Activated naive CD4-positive, alpha-beta T cell treated with anti-CD3 and anti-CD28 coated beads for 36 hours (primary cell): ENCODE measurements at regions of chr3 and their contacts with region 1.

Region 1: GRCh38 chr3:66971891-66972551 is 26.1 kb upstream of the KBTBD8 start:
- DNase-seq: peak; percentile 81
- H3K4me3 Mint-ChIP-seq: peak overlapping the region; percentile 68
- H3K27ac Mint-ChIP-seq: peak overlapping the region; percentile 50
- H3K4me1 Mint-ChIP-seq: peaks cover 7% of the 10 kb centered on the region
- H3K27me3 Mint-ChIP-seq: no peaks in the 10 kb centered on the region

Region 2: DNA sequence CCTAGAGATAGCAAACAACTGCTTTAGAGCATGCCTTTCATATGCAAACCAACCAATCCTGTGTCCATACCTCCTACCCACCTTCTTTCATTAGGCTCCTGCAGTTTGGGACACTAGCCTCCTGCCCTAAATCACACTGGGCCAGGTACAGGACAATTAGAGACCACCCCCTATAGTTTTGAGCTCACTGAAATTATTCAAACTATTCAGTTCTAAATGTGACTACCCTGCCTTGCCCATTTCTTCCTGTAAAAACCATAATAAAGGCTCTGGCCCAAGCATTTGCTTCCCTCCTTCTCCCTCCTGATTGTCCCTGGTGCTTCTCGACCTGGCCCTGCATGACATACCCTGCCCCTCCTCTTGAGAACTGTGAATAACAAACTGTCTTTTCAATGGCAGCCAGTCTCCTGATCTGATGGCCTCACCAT is 439.8 kb before region 1 on chr3:
- CTCF ChIA-PET with region 1: no interaction called
- intact Hi-C with region 1: no loop called
- DNase-seq: no peak
- H3K4me3 Mint-ChIP-seq: no peak overlapping the region
- H3K27ac Mint-ChIP-seq: no peak overlapping the region
- H3K4me1 Mint-ChIP-seq: no peaks in the 10 kb centered on the region
- H3K27me3 Mint-ChIP-seq: no peaks in the 10 kb centered on the region

Region 3: DNA sequence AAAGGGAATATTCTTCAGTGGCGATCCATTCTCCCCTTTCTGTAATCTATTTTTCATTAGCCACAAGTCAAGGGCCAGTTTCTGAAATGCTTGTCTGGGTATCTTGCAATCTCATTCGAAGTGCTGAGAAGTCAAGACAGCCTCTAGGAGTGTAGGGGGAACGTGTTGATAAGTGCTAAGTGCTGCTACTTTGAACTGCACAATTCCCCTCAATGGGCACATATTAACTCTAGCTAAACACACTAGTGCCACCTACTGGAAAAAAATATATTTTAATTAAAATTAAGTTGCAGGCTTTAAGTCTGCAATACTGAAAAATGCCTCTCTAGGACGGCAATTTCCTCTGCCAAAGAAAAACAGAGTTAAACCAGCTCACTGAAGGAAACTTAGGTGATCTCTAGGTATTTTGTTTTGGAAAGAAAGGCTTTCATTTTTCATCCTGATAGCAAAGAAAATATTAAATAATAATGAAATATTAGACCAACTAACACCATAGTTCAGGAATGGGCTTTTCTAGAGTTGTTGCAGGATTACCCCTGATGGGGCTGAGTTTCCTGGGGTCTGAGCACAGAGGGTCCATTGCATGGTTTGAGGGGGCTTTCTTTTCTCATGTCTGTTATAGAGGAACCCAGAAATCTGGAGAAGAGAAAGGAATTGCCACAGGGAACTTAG is 155.8 kb before region 1 on chr3:
- CTCF ChIA-PET with region 1: no interaction called
- intact Hi-C with region 1: no loop called
- DNase-seq: peak; percentile 12
- H3K4me3 Mint-ChIP-seq: no peak overlapping the region
- H3K27ac Mint-ChIP-seq: no peak overlapping the region
- H3K4me1 Mint-ChIP-seq: no peaks in the 10 kb centered on the region
- H3K27me3 Mint-ChIP-seq: no peaks in the 10 kb centered on the region

Region 4: GRCh38 chr3:66983101-66983500 is 11.1 kb after region 1 on chr3:
- CTCF ChIA-PET with region 1: interaction called, 15 read pairs
- intact Hi-C with region 1: no loop called
- DNase-seq: no peak
- H3K4me3 Mint-ChIP-seq: no peak overlapping the region
- H3K27ac Mint-ChIP-seq: no peak overlapping the region
- H3K4me1 Mint-ChIP-seq: no peaks in the 10 kb centered on the region
- H3K27me3 Mint-ChIP-seq: no peaks in the 10 kb centered on the region

Region 5: GRCh38 chr3:66998113-66998903 is 26.3 kb after region 1 on chr3 and contains the start of gene KBTBD8:
- CTCF ChIA-PET with region 1: interaction called, 17 read pairs
- intact Hi-C with region 1: loop called (anchors 1 kb)
- DNase-seq: peak; percentile 98
- H3K4me3 Mint-ChIP-seq: peak within 1 kb of the TSS; percentile 87
- H3K27ac Mint-ChIP-seq: peak within 1 kb of the TSS; percentile 95
- H3K4me1 Mint-ChIP-seq: peaks cover 27% of the 10 kb centered on the region
- H3K27me3 Mint-ChIP-seq: peaks cover 4% of the 10 kb centered on the region
- total RNA-seq, gene KBTBD8: 6.8 to 7.4 TPM

Region 6: DNA sequence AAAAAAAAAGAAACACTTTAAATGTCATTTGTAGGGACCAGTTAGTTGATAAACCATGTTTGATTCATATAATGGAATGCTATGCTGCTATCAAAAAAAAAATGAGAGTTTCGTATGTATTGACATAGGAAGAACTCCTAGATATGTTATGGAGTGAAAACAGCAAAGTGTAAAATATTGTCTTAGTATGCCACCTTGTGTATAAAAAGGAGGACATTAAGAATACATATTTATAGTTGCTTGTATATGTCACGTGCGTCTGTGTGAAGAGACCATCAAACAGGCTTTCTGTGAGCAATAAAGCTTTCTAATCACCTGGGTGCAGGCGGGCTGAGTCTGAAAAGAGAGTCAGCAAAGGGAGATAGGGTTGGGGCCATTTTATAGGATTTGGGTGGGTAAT is 65.6 kb after region 1 on chr3:
- CTCF ChIA-PET with region 1: interaction called, 26 read pairs
- intact Hi-C with region 1: loop called (anchors 1 kb)
- DNase-seq: no peak
- H3K4me3 Mint-ChIP-seq: no peak overlapping the region
- H3K27ac Mint-ChIP-seq: no peak overlapping the region
- H3K4me1 Mint-ChIP-seq: no peaks in the 10 kb centered on the region
- H3K27me3 Mint-ChIP-seq: no peaks in the 10 kb centered on the region

Region 7: DNA sequence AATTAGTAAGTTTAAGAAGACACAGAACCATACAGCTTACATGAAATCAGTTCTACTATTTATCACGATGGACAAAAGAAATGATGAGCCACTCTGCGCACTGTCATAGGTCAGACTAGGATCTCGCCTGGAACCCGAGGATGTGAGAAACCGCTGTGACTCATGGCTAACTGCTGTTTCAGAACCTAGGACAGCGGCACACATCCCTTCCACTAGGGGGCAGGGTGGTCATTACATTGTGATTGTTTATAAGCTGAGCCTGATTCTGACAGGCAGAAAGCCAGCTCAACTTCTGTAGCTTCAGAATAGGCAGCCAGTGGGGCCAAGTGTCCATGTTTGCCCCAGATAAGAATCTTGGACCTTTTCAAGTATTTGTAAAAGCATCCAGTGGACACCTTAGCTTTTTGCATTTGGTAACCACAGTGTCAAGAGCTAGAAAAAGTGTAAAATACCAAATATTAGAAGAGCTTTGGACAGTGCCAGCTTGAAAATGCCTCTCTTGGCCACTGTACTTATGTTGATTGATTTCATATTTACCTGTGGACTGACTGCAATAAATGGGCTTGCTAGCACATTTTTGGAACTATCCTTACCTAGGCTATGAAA is 141.9 kb after region 1 on chr3:
- CTCF ChIA-PET with region 1: interaction called, 39 read pairs
- intact Hi-C with region 1: loop called (anchors 1 kb)
- DNase-seq: peak; percentile 94
- H3K4me3 Mint-ChIP-seq: no peak overlapping the region
- H3K27ac Mint-ChIP-seq: no peak overlapping the region
- H3K4me1 Mint-ChIP-seq: peaks cover 4% of the 10 kb centered on the region
- H3K27me3 Mint-ChIP-seq: peaks cover 24% of the 10 kb centered on the region

Region 8: GRCh38 chr3:67357610-67358458 is 385.8 kb after region 1 on chr3:
- CTCF ChIA-PET with region 1: interaction called, 4 read pairs
- intact Hi-C with region 1: loop called (anchors 5 kb)
- DNase-seq: no peak
- H3K4me3 Mint-ChIP-seq: no peak overlapping the region
- H3K27ac Mint-ChIP-seq: no peak overlapping the region
- H3K4me1 Mint-ChIP-seq: peaks cover 24% of the 10 kb centered on the region
- H3K27me3 Mint-ChIP-seq: no peaks in the 10 kb centered on the region

Region 9: DNA sequence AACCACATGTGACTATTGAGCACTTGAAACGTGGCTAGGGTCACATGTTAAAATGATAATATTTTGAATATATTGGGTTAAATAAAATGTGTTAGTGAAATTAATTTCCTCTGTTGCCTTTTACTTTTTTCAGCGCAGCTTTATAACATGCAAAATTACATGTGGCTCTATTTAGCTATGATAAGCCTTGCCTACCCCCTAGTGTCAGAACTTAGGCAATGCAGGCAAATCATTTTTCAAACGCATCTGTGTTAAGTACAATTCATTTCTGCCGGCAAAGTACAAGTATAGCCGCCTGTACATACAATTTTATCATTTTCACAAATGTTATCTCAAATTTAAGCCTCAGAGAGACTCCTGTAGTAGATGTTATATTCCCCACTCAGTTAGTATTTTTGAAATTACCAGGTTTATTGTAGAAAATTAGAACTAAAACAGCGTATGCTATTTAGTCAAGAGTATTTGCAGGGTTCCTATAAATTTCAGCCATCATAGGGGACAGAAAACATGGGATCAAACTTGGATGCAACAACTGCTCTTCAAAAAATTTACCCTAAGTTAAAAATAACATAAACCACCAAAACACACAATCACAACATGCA is 1904.2 kb after region 1 on chr3:
- CTCF ChIA-PET with region 1: interaction called, 8 read pairs
- intact Hi-C with region 1: loop called (anchors 1 kb)
- DNase-seq: peak; percentile 51
- H3K4me3 Mint-ChIP-seq: no peak overlapping the region
- H3K27ac Mint-ChIP-seq: no peak overlapping the region
- H3K4me1 Mint-ChIP-seq: no peaks in the 10 kb centered on the region
- H3K27me3 Mint-ChIP-seq: peaks cover 5% of the 10 kb centered on the region